ENCODE measurements at regions of chr2 and their contacts with region 1.

Region 1: GRCh38 chr2:65320042-65320725 is 92.6 kb downstream of the ACTR2 start:
- DNase-seq: peak; percentile 42
- H3K4me3 ChIP-seq: no peak overlapping the region
- H3K27ac ChIP-seq: no peak overlapping the region
- H3K4me1 ChIP-seq: peaks cover 46% of the 10 kb centered on the region
- CTCF ChIP-seq: peak; percentile 67

Region 2: DNA sequence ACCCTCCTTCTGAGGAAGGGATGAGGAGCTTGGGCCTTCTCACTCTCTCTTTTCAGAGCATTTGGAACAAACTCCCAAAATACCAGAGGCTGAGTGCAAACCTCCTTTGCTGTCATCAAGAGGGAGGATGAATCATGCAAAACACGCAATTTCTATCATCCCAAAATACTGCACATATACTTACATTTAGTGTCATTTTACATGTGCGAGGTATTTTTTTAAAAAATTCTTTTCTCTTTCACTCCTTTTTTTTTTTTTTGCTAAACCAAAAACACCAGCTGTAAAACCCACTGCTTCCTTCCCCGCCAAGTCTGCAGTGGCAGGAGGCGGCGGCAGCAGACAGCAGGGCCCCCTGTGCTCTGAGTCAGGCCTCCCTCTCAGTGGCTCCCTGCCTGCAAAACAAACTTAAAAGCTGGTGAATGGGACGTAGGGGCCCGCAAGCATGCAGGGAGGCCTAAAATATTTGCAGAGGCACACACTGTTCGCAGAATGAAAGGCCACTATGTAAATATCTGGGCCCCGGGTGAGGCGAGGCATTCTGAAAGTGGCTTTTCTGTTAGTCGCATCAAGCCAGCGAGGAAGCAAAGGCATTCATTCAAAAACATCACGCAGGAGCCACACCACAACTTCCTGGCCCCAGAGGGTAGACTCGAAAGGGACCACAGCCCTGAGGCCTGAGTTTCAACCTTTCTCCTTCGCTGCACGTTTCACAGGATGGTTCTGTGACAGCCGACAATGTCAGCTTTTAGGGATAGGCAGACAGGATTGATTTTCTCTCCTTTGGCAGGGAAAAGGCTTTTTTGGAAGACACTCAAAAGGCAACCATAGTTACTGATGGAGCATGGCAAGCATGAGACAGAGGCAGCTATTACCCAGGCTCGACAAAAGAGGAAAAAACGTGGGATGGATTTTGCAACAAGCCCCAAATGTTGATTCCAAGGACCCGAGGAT is 19.1 kb before region 1 on chr2:
- CTCF ChIA-PET with region 1: interaction called, 4 read pairs
- POLR2A ChIA-PET with region 1: interaction called, 4 read pairs
- intact Hi-C with region 1: loop called (anchors 1 kb)
- DNase-seq: peak; percentile 89
- H3K4me3 ChIP-seq: peak overlapping the region; percentile 44
- H3K27ac ChIP-seq: peak overlapping the region; percentile 86
- H3K4me1 ChIP-seq: peaks cover 50% of the 10 kb centered on the region
- CTCF ChIP-seq: 0 out of 2 replicates have a peak, but pooled peaks have one; percentile 31

Region 3: GRCh38 chr2:65350684-65351083 is 30.5 kb after region 1 on chr2:
- CTCF ChIA-PET with region 1: interaction called, 3 read pairs
- POLR2A ChIA-PET with region 1: interaction called, 4 read pairs
- intact Hi-C with region 1: loop called (anchors 1 kb)
- DNase-seq: peak; percentile 83
- H3K4me3 ChIP-seq: peak overlapping the region; percentile 46
- H3K27ac ChIP-seq: peak overlapping the region; percentile 81
- H3K4me1 ChIP-seq: peaks cover 70% of the 10 kb centered on the region
- CTCF ChIP-seq: peak; percentile 74

Region 4: DNA sequence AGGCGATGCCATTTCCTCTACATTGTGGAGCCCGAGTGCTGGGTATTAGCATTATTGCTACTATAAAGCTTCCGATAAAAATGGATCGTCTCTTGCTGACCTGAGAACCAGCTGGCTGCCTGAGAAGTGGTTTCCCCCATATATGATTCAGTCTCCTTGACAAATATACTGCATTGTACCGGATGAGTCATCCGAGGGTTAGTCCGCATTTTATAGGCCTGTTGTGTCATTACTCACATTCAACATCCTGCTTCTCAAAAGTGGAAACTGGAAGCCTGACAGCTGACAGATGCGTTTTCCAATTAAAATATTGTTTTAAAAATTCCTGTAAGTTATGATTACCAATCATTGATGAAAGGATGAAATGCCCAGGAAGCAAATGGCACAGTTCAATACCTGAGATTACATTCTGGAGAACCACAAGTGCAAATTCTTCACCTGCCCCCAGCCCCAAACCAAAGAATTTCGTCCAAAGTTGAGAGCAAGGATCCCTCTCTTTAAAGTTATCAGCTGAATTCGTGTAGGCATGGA is 46.5 kb after region 1 on chr2:
- CTCF ChIA-PET with region 1: interaction called, 3 read pairs
- POLR2A ChIA-PET with region 1: interaction called, 13 read pairs
- intact Hi-C with region 1: loop called (anchors 1 kb)
- DNase-seq: peak; percentile 71
- H3K4me3 ChIP-seq: peak overlapping the region; percentile 68
- H3K27ac ChIP-seq: peak overlapping the region; percentile 85
- H3K4me1 ChIP-seq: peaks cover 95% of the 10 kb centered on the region
- CTCF ChIP-seq: no peak

Region 5: DNA sequence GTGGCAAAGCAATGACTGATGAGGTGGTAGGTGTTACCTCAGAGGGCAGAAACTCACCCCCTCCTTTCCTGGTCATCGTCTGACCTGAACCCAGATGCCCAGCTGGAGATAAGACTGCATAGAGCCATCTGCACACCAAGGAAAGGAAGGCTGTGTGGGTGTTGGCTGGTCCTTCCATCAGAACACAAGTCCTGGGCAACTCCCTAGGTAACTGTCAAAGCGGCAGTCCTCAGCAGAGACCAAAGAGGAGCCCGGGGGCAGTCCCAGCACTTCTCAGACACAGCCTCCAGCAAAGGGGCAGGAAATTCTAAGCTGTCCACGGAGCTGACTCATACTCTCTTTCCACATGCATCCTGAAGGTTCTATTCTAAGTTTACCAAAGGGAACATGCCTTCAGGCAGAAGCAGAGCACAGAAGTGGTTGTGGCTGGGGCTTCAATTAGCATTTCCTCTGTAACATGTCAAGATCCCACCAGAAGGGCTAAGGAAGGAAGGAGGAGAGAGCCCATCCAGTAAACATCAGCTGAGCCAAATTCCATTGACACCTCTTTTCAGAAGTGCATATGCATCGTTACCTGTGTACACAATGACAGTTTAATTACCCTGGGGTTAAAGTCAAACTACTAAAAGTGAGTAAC is 57.5 kb after region 1 on chr2:
- CTCF ChIA-PET with region 1: no interaction called
- POLR2A ChIA-PET with region 1: interaction called, 15 read pairs
- intact Hi-C with region 1: loop called (anchors 2 kb)
- DNase-seq: no peak
- H3K4me3 ChIP-seq: no peak overlapping the region
- H3K27ac ChIP-seq: no peak overlapping the region
- H3K4me1 ChIP-seq: peaks cover 74% of the 10 kb centered on the region
- CTCF ChIP-seq: no peak

Region 6: DNA sequence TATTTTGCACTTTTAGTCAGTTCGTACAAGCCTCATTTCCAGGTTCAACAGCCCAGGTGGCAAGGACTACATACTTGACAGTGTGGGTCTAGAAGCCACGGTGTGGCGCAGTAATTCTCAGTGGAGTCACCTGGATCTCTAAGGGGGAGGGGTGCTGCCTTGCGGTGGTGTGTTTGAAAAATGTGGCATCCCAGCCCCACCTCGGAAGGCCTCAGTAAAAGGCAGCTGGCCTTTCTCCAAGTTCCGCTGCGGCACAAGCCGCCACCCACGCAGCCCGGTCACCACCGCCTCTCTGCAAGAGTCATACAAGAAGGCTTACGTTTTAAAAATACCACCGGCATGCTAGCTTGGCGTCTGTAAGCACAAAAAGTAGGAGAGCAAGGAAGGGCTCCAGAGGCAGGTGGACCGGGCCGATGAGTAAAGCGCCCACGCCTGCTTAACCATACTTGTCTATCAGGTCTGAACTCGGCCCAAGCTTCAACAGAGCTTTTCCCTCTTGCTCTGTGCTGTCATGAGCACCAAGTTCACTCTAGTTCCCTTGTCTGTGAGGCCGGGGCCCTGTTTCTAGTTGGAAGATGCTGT is 62.7 kb after region 1 on chr2:
- CTCF ChIA-PET with region 1: no interaction called
- POLR2A ChIA-PET with region 1: interaction called, 5 read pairs
- intact Hi-C with region 1: loop called (anchors 2 kb)
- DNase-seq: peak; percentile 85
- H3K4me3 ChIP-seq: peak overlapping the region; percentile 51
- H3K27ac ChIP-seq: peak overlapping the region; percentile 89
- H3K4me1 ChIP-seq: peaks cover 87% of the 10 kb centered on the region
- CTCF ChIP-seq: peak; percentile 82

Region 7: GRCh38 chr2:65425276-65425675 is 105.1 kb after region 1 on chr2:
- CTCF ChIA-PET with region 1: no interaction called
- POLR2A ChIA-PET with region 1: no interaction called
- intact Hi-C with region 1: no loop called
- DNase-seq: no peak
- H3K4me3 ChIP-seq: no peak overlapping the region
- H3K27ac ChIP-seq: no peak overlapping the region
- H3K4me1 ChIP-seq: peaks cover 55% of the 10 kb centered on the region
- CTCF ChIP-seq: no peak

Region 8: GRCh38 chr2:65495251-65495877 is 175.2 kb after region 1 on chr2:
- CTCF ChIA-PET with region 1: no interaction called
- POLR2A ChIA-PET with region 1: interaction called, 11 read pairs
- intact Hi-C with region 1: no loop called
- DNase-seq: no peak
- H3K4me3 ChIP-seq: no peak overlapping the region
- H3K27ac ChIP-seq: no peak overlapping the region
- H3K4me1 ChIP-seq: no peaks in the 10 kb centered on the region
- CTCF ChIP-seq: no peak